Naive thymus-derived CD4-positive, alpha-beta T cell (primary cell): ENCODE measurements at regions of chr1 and their contacts with region 1.

Region 1: DNA sequence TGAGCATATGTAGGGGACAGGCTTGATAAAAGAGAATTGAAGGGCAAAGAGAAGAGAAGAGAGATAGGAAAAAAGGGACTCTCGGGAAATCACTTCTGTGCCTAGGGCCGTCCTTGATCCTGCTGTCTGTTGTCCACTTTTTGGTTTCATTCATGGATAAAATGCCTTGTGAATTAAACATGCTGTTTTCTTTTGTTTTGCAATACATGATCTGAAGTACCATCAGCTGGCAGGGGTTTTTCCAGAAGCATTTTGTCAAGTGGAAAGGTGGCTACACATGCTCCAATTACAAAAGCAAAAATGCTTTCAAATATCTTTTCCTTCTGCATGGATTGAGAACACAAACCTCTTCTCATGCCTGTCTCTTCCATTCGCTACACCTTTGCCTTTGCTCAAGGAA is 361.7 kb downstream of the PDE4B start:
- DNase-seq: no peak
- ATAC-seq: no peak
- H3K4me3 ChIP-seq: no peak overlapping the region
- H3K4me3 Mint-ChIP-seq: no peak overlapping the region
- H3K27ac ChIP-seq: no peak overlapping the region
- H3K27ac Mint-ChIP-seq: no peak overlapping the region
- H3K4me1 ChIP-seq: no peaks in the 10 kb centered on the region
- H3K4me1 Mint-ChIP-seq: no peaks in the 10 kb centered on the region
- H3K27me3 ChIP-seq: no peaks in the 10 kb centered on the region
- H3K27me3 Mint-ChIP-seq: peaks cover 14 to 38% (median 28%) of the 10 kb centered on the region in 5 donors

Region 2: DNA sequence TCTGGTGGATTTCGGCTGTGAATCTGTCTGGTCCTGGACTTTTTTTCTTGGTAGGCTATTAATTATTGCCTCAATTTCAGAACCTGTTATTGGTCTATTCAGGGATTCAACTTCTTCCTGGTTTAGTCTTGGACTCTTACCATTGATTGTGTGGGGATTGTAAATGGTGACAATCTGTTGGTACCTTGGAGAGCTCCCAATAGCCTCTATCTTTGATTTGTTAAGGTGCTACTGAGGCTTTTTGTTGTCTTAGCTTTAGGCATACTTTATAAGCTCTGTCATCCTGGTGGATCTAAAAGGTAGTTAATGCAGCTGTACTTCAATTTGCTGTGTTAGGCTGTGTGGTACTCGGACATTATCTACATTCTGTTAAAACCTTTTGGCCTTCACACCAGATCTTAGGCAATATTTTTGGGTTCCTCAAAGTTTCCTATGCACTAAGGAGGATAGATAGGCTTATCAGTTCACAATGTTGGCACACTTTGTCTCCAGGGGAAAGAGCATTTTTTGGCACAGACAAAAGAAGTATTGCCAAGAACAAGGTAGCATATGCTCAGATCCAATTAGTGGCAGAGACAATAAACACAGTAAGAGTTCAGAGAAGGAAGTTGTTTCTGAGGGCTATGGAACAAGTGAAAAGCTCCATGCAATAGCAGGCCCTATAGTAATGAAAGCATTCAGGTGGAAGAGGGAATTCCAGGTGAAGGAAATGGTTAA is 131.3 kb before region 1 on chr1:
- CTCF ChIA-PET with region 1: no interaction called
- POLR2A ChIA-PET with region 1: no interaction called
- intact Hi-C with region 1: no loop called
- DNase-seq: no peak
- ATAC-seq: no peak
- H3K4me3 ChIP-seq: no peak overlapping the region
- H3K4me3 Mint-ChIP-seq: no peak overlapping the region
- H3K27ac ChIP-seq: no peak overlapping the region
- H3K27ac Mint-ChIP-seq: no peak overlapping the region
- H3K4me1 ChIP-seq: no peaks in the 10 kb centered on the region
- H3K4me1 Mint-ChIP-seq: no peaks in the 10 kb centered on the region
- H3K27me3 ChIP-seq: no peaks in the 10 kb centered on the region
- H3K27me3 Mint-ChIP-seq: peaks cover 0 to 34% (median 10%) of the 10 kb centered on the region in 5 donors

Region 3: DNA sequence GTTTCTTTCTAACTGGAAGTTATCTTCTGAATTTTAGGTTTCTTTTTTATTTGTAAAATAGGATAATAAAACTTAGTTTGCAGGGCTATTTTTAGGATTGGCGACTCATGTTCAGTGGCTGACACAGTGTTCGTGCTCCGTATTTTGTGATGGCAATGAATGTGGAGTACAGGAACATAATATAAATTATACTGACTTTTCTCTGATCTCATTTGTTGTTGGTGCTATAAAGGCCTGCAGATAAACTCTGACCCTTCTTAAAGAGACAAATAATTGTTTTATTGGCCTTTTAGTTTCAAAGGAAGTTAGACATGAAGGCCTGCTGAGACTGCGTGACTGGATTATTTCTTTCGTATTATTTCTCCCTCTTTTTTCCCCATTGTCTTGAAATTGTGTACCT is 22.1 kb before region 1 on chr1:
- CTCF ChIA-PET with region 1: no interaction called
- POLR2A ChIA-PET with region 1: no interaction called
- intact Hi-C with region 1: loop called in 1 of 2 experiments (anchors 2 kb)
- DNase-seq: no peak
- ATAC-seq: no peak
- H3K4me3 ChIP-seq: no peak overlapping the region
- H3K4me3 Mint-ChIP-seq: no peak overlapping the region
- H3K27ac ChIP-seq: no peak overlapping the region
- H3K27ac Mint-ChIP-seq: no peak overlapping the region
- H3K4me1 ChIP-seq: no peaks in the 10 kb centered on the region
- H3K4me1 Mint-ChIP-seq: peaks cover 0 to 5% (median 0%) of the 10 kb centered on the region in 7 donors
- H3K27me3 ChIP-seq: no peaks in the 10 kb centered on the region
- H3K27me3 Mint-ChIP-seq: peaks cover 4 to 21% (median 7%) of the 10 kb centered on the region in 5 donors

Region 4: GRCh38 chr1:66168948-66169671 is 14.7 kb after region 1 on chr1:
- CTCF ChIA-PET with region 1: no interaction called
- POLR2A ChIA-PET with region 1: no interaction called
- intact Hi-C with region 1: no loop called
- DNase-seq: peak in 7 of 9 donors; percentile 12 to 54 (median 24)
- ATAC-seq: peak; percentile 65
- H3K4me3 ChIP-seq: no peak overlapping the region
- H3K4me3 Mint-ChIP-seq: peak overlapping the region in 1 of 10 donors; percentile 28
- H3K27ac ChIP-seq: no peak overlapping the region
- H3K27ac Mint-ChIP-seq: no peak overlapping the region
- H3K4me1 ChIP-seq: no peaks in the 10 kb centered on the region
- H3K4me1 Mint-ChIP-seq: peaks cover 2 to 23% (median 16%) of the 10 kb centered on the region in 7 donors
- H3K27me3 ChIP-seq: no peaks in the 10 kb centered on the region
- H3K27me3 Mint-ChIP-seq: peaks cover 0 to 42% (median 12%) of the 10 kb centered on the region in 5 donors